ENCODE measurements at regions of chr3 and their contacts with region 1.

Region 1: GRCh38 chr3:195154793-195155535 is 116.0 kb downstream of the XXYLT1 start:
- DNase-seq: peak; percentile 91 to 94
- ATAC-seq: peak; percentile 46 to 85 (median 79)
- H3K4me3 ChIP-seq: no peak overlapping the region
- H3K27ac ChIP-seq: peak overlapping the region; percentile 52 to 92 (median 84)
- H3K4me1 ChIP-seq: peaks cover 36 to 93% (median 73%) of the 10 kb centered on the region in 9 donors
- H3K27me3 ChIP-seq: no peaks in the 10 kb centered on the region
- CTCF ChIP-seq: no peak

Region 2: GRCh38 chr3:195117978-195118581 is 36.9 kb before region 1 on chr3:
- intact Hi-C with region 1: loop called in 1 of 10 experiments (anchors 5 kb)
- DNase-seq: no peak
- ATAC-seq: peak in 5 of 8 donors; percentile 19 to 45 (median 35)
- H3K4me3 ChIP-seq: no peak overlapping the region
- H3K27ac ChIP-seq: peak overlapping the region in 3 of 10 donors; percentile 16 to 40 (median 38)
- H3K4me1 ChIP-seq: peaks cover 3 to 45% (median 19%) of the 10 kb centered on the region in 9 donors
- H3K27me3 ChIP-seq: no peaks in the 10 kb centered on the region
- CTCF ChIP-seq: peak in 4 of 9 donors; percentile 16 to 42 (median 29)

Region 3: DNA sequence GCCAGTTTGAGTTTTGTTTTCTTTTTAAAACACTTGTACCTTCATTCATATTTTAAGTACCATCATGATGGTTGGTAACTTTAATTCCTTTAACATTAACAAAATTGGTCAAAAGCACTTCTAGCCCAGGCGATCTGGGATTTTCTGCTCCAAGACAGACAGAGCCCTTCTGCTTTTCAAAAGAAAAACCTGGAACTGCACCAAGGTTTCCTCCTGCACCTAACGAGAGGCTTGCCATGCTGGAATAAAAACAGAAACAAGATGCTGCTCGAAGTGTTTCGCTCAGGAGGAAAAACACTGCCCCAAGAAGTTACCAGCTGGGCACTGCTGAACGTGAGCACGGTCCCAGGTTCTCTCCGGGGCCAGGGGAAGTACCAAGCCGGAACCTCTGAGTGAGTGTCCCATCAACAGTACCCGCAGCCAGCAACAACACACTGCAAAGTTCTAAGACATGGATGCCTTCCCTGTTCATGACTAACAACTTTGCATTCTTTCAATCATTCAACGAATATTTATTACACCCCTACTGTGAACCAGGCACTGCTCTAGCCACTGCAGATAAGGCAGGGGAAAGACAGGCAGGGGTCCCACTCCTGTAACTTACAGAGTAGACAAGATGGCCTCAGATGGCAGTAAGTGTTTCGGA is 17.2 kb after region 1 on chr3:
- intact Hi-C with region 1: loop called in 1 of 10 experiments (anchors 2 kb)
- DNase-seq: no peak
- ATAC-seq: peak in 3 of 8 donors; percentile 24 to 49 (median 41)
- H3K4me3 ChIP-seq: no peak overlapping the region
- H3K27ac ChIP-seq: peak overlapping the region in 4 of 10 donors; percentile 0 to 53 (median 26)
- H3K4me1 ChIP-seq: peaks cover 0 to 50% (median 33%) of the 10 kb centered on the region in 9 donors
- H3K27me3 ChIP-seq: no peaks in the 10 kb centered on the region
- CTCF ChIP-seq: no peak

Region 4: GRCh38 chr3:195204360-195205163 is 49.6 kb after region 1 on chr3:
- intact Hi-C with region 1: loop called in 1 of 10 experiments (anchors 10 kb)
- DNase-seq: no peak
- ATAC-seq: peak in 6 of 8 donors; percentile 16 to 35 (median 24)
- H3K4me3 ChIP-seq: no peak overlapping the region
- H3K27ac ChIP-seq: peak overlapping the region in 4 of 10 donors; percentile 11 to 64 (median 50)
- H3K4me1 ChIP-seq: peaks cover 15 to 47% (median 34%) of the 10 kb centered on the region in 9 donors
- H3K27me3 ChIP-seq: no peaks in the 10 kb centered on the region
- CTCF ChIP-seq: no peak

Region 5: DNA sequence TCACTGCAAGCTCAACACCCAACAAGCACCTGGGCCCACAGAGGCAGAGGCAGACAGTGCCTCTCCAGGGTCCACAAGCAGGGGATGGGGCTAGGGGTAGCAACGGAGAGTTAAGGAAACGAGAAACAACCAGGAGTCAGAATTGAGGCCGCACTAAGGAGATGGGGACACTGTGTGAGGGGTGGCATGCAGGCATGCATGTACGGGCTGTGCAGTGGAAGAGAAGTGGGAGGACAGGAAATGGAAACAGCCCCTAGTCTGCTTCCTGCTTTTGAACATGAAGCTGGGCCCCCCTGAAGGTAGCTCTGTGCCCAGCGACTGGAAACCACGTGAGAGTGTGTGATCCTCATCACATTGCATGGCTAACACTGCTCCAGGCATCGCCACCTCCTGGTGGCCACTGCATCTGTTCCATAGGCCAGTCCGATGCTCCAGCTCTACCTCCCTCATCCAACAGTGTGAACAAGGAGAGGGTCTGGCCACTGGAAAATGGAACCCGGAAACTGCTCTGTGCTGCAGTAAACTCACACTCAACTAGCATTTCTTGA is 72.0 kb after region 1 on chr3:
- intact Hi-C with region 1: loop called in 1 of 10 experiments (anchors 5 kb)
- DNase-seq: no peak
- ATAC-seq: peak in 4 of 8 donors; percentile 39 to 70 (median 58)
- H3K4me3 ChIP-seq: no peak overlapping the region
- H3K27ac ChIP-seq: no peak overlapping the region
- H3K4me1 ChIP-seq: peaks cover 10 to 22% (median 13%) of the 10 kb centered on the region in 9 donors
- H3K27me3 ChIP-seq: no peaks in the 10 kb centered on the region
- CTCF ChIP-seq: peak in 7 of 9 donors; percentile 1 to 60 (median 33)

Region 6: GRCh38 chr3:195250473-195251251 is 95.7 kb after region 1 on chr3:
- intact Hi-C with region 1: loop called in 3 of 10 experiments (anchors 5 to 10 kb)
- DNase-seq: peak in 1 of 2 donors; percentile 55
- ATAC-seq: peak; percentile 38 to 75 (median 70)
- H3K4me3 ChIP-seq: no peak overlapping the region
- H3K27ac ChIP-seq: no peak overlapping the region
- H3K4me1 ChIP-seq: peaks cover 0 to 14% (median 3%) of the 10 kb centered on the region in 9 donors
- H3K27me3 ChIP-seq: no peaks in the 10 kb centered on the region
- CTCF ChIP-seq: peak in 8 of 9 donors; percentile 13 to 60 (median 46)